ENCODE measurements at regions of chr7 and their contacts with region 1.

Region 1: DNA sequence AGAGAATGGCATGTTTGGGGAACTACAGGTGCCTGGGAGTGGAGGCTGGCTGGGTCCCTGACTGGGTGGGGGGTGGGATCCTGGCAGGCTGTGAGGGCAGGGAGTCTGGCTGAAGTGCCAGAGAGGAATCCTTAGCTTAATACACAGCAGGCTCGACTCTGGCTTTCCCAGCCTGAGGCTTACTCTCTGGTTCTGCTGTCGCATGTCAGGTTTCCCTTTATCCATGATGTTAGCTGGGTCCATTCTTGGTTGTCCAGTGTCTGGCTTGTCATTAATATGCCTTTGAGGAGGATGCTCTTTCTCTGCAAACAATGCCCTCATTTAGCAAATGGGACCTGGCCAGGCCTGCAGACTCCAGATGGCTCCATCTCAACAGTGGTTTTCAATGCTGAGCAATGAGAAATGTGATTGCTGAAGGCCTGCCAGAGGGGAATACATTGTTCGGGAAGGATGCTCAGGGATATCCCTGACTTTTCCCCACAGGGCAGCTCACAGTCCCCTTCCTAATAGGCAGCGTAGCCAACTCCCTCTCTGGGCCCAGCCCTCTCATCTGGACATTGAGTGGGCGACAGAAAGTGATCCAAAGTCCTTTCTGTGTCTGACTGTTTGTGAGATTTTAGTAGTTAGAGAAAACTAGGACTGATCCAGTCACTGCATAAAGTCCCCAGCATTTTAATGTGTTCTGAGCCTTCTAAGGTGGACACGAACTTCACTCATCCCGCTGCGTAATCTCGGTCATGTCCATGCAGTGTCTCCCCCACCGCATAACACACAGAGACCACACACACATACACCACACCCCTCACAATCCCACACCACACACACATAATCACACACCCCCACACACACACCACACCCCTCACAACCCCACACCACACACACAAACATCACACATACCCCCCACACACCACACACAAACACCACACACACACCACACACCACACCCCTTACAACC is 124.9 kb downstream of the ANLN start:
- DNase-seq: no peak
- ATAC-seq: peak; percentile 66
- H3K4me3 ChIP-seq: no peak overlapping the region
- H3K27ac ChIP-seq: peak overlapping the region; percentile 1; the same call in 1 of the 2 replicates
- H3K4me1 ChIP-seq: peaks cover 6% of the 10 kb centered on the region
- H3K27me3 ChIP-seq: no peaks in the 10 kb centered on the region
- CTCF ChIP-seq: no peak

Region 2: GRCh38 chr7:36653008-36653670 is 138.6 kb after region 1 on chr7:
- CTCF ChIA-PET with region 1: interaction called, 10 read pairs
- POLR2A ChIA-PET with region 1: no interaction called
- in situ Hi-C with region 1: no loop called
- intact Hi-C with region 1: no loop called
- DNase-seq: no peak
- ATAC-seq: no peak
- H3K4me3 ChIP-seq: no peak overlapping the region
- H3K27ac ChIP-seq: peak overlapping the region; percentile 99
- H3K4me1 ChIP-seq: peaks cover 11% of the 10 kb centered on the region
- H3K27me3 ChIP-seq: no peaks in the 10 kb centered on the region
- CTCF ChIP-seq: no peak

Region 3: GRCh38 chr7:37141742-37142141 is 627.2 kb after region 1 on chr7:
- CTCF ChIA-PET with region 1: no interaction called
- POLR2A ChIA-PET with region 1: interaction called, 18 read pairs
- in situ Hi-C with region 1: no loop called
- intact Hi-C with region 1: no loop called
- DNase-seq: no peak
- ATAC-seq: no peak
- H3K4me3 ChIP-seq: no peak overlapping the region
- H3K27ac ChIP-seq: no peak overlapping the region
- H3K4me1 ChIP-seq: no peaks in the 10 kb centered on the region
- H3K27me3 ChIP-seq: no peaks in the 10 kb centered on the region
- CTCF ChIP-seq: peak; percentile 15; the same call in 1 of the 2 replicates

Measured in Panc1 (cell line).